Esophagus muscularis mucosa (tissue), 4 donors: ENCODE measurements at regions of chr11 and their contacts with region 1.

Region 1: GRCh38 chr11:9757809-9758636 is 94.1 kb downstream of the SWAP70 start:
- DNase-seq: peak; percentile 95
- H3K4me3 ChIP-seq: peak overlapping the region; percentile 68 to 82 (median 78)
- H3K27ac ChIP-seq: peak overlapping the region; percentile 86 to 94 (median 91)
- H3K4me1 ChIP-seq: peaks cover 40 to 66% (median 52%) of the 10 kb centered on the region in 4 donors
- H3K27me3 ChIP-seq: no peaks in the 10 kb centered on the region
- CTCF ChIP-seq: peak; percentile 92 to 97 (median 95)
- EP300 ChIP-seq: no peak
- POLR2A ChIP-seq: peak; percentile 22

Region 2: DNA sequence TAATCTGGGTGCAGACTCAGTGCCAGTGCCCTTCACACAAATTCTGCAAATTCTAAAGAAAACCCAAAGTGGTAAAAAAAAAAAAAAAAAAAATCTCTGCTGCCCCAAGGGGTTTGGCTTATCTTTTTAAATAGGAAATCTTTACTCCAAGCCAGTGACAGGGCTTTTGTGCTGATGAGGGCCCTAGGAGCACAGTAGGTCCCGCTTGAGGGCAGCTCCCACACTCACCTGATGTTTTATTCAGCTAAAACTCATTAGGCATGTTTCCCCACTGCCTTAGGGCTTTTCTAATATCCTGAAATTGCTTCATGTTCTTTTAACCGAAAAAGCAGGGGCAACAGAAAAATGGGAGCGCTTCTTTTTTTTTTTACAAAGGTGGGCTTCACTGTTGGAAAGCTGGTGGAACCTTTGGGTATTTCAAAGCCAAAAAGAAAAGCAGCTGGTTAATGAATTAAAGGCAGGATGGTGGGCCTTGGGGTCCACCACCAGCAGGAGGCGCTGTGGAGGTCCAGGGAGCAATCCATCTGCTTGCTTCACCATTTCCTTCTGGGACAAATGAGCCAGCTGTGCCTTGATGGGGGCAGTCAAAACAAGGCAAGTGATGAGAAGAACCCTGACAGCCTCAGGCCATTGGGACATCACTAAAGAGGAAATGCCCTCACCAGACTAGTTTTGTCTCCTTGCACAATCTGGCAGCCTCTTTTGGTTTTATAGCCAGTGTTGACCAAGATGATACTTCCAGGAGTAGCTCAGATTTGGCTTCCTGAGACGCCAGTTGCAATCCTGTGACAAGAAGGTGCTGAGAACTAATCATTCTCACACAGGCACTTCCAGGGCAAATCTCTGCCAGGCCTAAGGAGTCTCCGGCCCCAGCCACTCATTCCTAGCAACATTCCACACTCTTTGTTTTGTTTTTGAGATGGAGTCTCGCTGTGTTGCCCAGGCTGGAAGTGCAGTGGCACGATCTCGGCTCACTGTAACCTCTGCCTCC is 222.9 kb before region 1 on chr11:
- intact Hi-C with region 1: loop called (anchors 10 kb)
- DNase-seq: peak; percentile 96
- H3K4me3 ChIP-seq: no peak overlapping the region
- H3K27ac ChIP-seq: peak overlapping the region; percentile 66 to 75 (median 74)
- H3K4me1 ChIP-seq: peaks cover 6 to 32% (median 28%) of the 10 kb centered on the region in 4 donors
- H3K27me3 ChIP-seq: no peaks in the 10 kb centered on the region
- CTCF ChIP-seq: peak; percentile 71 to 81 (median 77)
- EP300 ChIP-seq: no peak
- POLR2A ChIP-seq: no peak

Region 3: DNA sequence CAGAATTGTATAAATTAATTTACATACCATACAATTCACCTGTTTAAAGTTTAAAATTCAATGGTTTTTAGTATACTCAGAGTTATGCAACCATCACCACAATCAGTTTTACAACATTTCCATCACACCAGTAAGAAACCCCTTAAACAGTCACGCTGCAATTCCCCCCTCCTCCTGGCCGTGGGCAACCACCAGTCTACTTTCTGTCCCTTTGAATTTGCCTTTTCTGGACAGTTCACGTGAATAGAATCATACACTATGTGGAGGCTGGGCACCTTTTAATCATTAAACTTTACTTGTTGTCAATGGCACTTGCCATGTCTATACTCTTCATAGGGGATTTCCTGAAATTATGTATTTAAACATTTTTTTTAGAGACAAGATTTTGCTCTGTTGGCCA is 114.3 kb before region 1 on chr11:
- intact Hi-C with region 1: no loop called
- DNase-seq: no peak
- H3K4me3 ChIP-seq: no peak overlapping the region
- H3K27ac ChIP-seq: no peak overlapping the region
- H3K4me1 ChIP-seq: peaks cover 0 to 13% (median 5%) of the 10 kb centered on the region in 4 donors
- H3K27me3 ChIP-seq: no peaks in the 10 kb centered on the region
- CTCF ChIP-seq: no peak
- EP300 ChIP-seq: no peak
- POLR2A ChIP-seq: no peak

Region 4: GRCh38 chr11:9802291-9802861 is 44.4 kb after region 1 on chr11:
- intact Hi-C with region 1: loop called (anchors 5 kb)
- DNase-seq: no peak
- H3K4me3 ChIP-seq: no peak overlapping the region
- H3K27ac ChIP-seq: peak overlapping the region; percentile 71 to 80 (median 75)
- H3K4me1 ChIP-seq: peaks cover 30 to 41% (median 38%) of the 10 kb centered on the region in 4 donors
- H3K27me3 ChIP-seq: no peaks in the 10 kb centered on the region
- CTCF ChIP-seq: no peak
- EP300 ChIP-seq: no peak
- POLR2A ChIP-seq: no peak

Region 5: DNA sequence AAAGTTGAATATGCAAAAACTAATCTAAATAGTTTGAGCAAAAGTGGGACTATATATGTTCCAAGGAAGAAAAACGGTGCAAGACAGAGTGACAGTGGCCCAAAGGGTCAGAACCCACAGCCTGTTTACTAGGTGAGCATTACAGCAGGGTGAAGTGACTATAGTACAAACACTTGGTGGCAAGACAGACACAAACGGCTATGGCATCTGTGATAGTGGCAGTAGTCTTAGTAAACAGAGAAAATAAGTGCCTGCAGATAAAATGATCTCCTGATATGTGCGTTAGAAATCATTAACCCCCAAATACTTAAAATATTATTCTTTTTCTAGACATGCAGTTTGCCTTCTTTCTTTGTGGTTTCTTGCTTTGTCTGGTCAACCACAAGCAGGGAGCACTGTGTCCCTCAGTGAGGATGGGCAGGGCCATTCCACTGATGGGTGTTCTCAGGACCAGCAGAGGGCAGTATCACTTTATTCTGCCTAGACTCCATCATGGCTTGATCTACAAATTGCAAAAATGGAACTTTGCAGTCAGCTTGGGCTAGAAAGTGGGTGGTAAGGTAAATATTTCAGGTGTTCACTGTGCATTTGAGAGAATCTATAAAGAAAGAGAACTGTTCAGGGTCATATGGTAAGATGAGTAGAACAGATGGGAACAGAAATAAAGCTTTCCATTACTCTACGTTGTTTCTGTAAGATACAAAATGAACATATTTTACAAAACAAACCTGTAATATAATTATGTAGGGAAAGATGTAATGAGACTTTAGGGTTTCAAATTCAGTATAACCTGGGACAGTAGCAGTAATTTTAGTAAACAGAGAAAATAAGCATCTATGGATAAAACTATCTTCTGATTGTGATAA is 104.1 kb after region 1 on chr11:
- intact Hi-C with region 1: loop called (anchors 5 kb)
- DNase-seq: no peak
- H3K4me3 ChIP-seq: no peak overlapping the region
- H3K27ac ChIP-seq: no peak overlapping the region
- H3K4me1 ChIP-seq: peaks cover 4 to 19% (median 8%) of the 10 kb centered on the region in 4 donors
- H3K27me3 ChIP-seq: no peaks in the 10 kb centered on the region
- CTCF ChIP-seq: peak; percentile 63 to 83 (median 67)
- EP300 ChIP-seq: no peak
- POLR2A ChIP-seq: no peak

Region 6: GRCh38 chr11:9972989-9973388 is 215.0 kb after region 1 on chr11:
- intact Hi-C with region 1: loop called (anchors 5 kb)
- DNase-seq: no peak
- H3K4me3 ChIP-seq: no peak overlapping the region
- H3K27ac ChIP-seq: no peak overlapping the region
- H3K4me1 ChIP-seq: peaks cover 0 to 16% (median 9%) of the 10 kb centered on the region in 4 donors
- H3K27me3 ChIP-seq: no peaks in the 10 kb centered on the region
- CTCF ChIP-seq: peak; percentile 63 to 75 (median 67)
- EP300 ChIP-seq: no peak
- POLR2A ChIP-seq: no peak

Region 7: DNA sequence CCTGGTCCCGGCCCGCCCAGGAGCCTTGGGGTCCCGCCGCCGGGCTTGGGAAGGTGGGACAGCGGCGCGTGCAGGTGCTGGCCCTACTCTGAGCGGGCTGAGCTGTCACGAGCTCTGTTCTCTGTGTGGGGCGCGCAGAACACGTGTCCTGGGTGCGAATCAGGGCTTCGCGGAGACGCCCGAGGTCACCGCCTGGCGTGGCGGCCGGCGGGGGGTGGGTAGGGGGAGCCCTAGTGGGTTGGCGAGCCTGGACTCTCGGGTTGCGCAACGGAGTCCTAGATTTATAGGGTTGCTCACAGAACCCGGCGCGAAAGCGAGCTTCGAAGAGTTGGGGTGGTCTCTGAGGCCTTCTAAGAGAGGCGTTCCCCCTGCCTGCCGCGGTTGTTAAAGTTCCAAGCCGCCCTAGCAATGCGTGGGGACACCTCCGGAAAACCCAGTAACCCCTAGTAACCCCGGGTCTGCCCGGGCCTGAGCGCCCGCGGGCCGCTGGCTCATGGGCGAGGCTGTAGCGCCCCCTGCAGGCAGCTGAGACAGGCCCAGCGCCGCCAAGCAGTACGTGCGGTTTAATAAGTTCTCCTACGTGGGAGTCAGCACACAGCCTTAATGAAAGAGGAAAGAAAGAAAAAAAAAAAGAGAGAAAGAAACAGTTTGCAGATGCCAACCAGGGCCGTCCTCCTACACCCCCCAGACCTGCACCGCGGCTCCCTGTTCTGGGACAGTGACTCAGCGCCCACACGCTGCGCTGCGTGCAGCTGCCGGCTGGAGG is 549.6 kb after region 1 on chr11:
- intact Hi-C with region 1: loop called (anchors 5 kb)
- DNase-seq: peak; percentile 94
- H3K4me3 ChIP-seq: peak overlapping the region; percentile 64 to 85 (median 81)
- H3K27ac ChIP-seq: peak overlapping the region; percentile 91 to 95 (median 93)
- H3K4me1 ChIP-seq: peaks cover 46 to 77% (median 63%) of the 10 kb centered on the region in 4 donors
- H3K27me3 ChIP-seq: peaks cover 0 to 5% (median 0%) of the 10 kb centered on the region in 4 donors
- CTCF ChIP-seq: peak; percentile 96 to 99 (median 98)
- EP300 ChIP-seq: no peak
- POLR2A ChIP-seq: no peak